MCF 10A (cell line): ENCODE measurements at regions of chr1 and their contacts with region 1.

Region 1: DNA sequence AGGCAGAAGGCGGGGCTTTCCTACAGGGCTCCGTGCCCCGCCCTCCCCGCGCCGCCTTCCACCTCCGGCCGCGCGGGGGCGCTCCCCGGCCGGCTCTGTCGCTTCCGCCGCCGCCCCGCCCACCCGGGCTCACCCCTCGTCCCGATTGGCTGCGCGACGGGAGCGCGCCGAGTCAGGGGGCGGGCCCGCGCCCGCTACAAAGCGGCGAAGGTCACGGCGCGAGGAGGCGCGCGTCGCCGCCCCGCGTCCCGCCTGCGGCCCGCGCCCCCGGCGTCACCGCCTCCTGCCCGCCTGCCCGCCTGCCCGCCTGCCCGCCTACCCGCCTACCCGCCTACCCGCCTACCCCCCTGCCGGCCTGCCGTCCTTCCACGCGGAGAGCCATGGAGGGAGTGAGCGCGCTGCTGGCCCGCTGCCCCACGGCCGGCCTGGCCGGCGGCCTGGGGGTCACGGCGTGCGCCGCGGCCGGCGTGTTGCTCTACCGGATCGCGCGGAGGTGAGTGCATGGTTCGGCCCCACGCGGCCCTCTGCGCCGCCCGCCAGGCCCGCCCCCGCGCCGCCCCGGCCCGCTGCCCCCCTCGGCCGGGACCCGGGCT is at the start of gene TMEM201:
- DNase-seq: peak; percentile 91
- H3K4me3 Mint-ChIP-seq: peak within 1 kb of the TSS; percentile 75
- H3K27ac Mint-ChIP-seq: peak within 1 kb of the TSS; percentile 32
- H3K4me1 Mint-ChIP-seq: peaks cover 16% of the 10 kb centered on the region
- H3K27me3 Mint-ChIP-seq: no peaks in the 10 kb centered on the region
- CTCF ChIP-seq: peak; percentile 62
- total RNA-seq, gene TMEM201: 9.2 and 11.1 TPM in 2 replicates

Region 2: GRCh38 chr1:9143250-9143649 is 445.4 kb before region 1 on chr1:
- CTCF ChIA-PET with region 1: no interaction called
- POLR2A ChIA-PET with region 1: no interaction called
- intact Hi-C with region 1: no loop called
- DNase-seq: peak; percentile 76
- H3K4me3 Mint-ChIP-seq: no peak overlapping the region
- H3K27ac Mint-ChIP-seq: no peak overlapping the region
- H3K4me1 Mint-ChIP-seq: peaks cover 10% of the 10 kb centered on the region
- H3K27me3 Mint-ChIP-seq: no peaks in the 10 kb centered on the region
- CTCF ChIP-seq: no peak

Region 3: GRCh38 chr1:9529190-9529589 is 59.5 kb before region 1 on chr1:
- CTCF ChIA-PET with region 1: no interaction called
- POLR2A ChIA-PET with region 1: no interaction called
- intact Hi-C with region 1: no loop called
- DNase-seq: no peak
- H3K4me3 Mint-ChIP-seq: no peak overlapping the region
- H3K27ac Mint-ChIP-seq: no peak overlapping the region
- H3K4me1 Mint-ChIP-seq: no peaks in the 10 kb centered on the region
- H3K27me3 Mint-ChIP-seq: no peaks in the 10 kb centered on the region
- CTCF ChIP-seq: no peak

Region 4: GRCh38 chr1:9573723-9574122 is 14.9 kb before region 1 on chr1:
- CTCF ChIA-PET with region 1: interaction called, 11 read pairs
- POLR2A ChIA-PET with region 1: interaction called, 3 read pairs
- intact Hi-C with region 1: no loop called
- DNase-seq: peak; percentile 27
- H3K4me3 Mint-ChIP-seq: no peak overlapping the region
- H3K27ac Mint-ChIP-seq: no peak overlapping the region
- H3K4me1 Mint-ChIP-seq: no peaks in the 10 kb centered on the region
- H3K27me3 Mint-ChIP-seq: no peaks in the 10 kb centered on the region
- CTCF ChIP-seq: no peak

Region 5: DNA sequence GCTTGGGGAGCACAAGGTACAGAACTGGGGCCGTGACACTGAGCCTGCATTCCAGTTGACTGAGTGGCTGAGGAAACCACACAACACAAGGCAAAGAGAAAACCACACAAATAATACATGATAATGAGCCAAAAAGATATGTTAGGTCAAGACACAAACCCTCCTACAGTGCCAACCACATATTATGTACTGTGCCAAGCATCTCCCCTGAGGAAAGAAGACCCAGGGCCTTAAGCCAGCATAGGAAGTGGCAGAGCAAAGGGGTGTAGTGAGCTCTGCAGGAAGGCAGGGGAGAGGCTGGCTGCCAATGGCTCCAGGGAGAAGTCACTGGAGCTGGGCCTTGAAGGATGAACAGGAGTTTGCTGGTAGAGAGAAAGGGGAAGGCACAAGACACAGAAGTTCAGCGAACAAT is 293.2 kb after region 1 on chr1:
- CTCF ChIA-PET with region 1: no interaction called
- POLR2A ChIA-PET with region 1: no interaction called
- intact Hi-C with region 1: no loop called
- DNase-seq: peak; percentile 91
- H3K4me3 Mint-ChIP-seq: no peak overlapping the region
- H3K27ac Mint-ChIP-seq: peak overlapping the region; percentile 14
- H3K4me1 Mint-ChIP-seq: peaks cover 29% of the 10 kb centered on the region
- H3K27me3 Mint-ChIP-seq: no peaks in the 10 kb centered on the region
- CTCF ChIP-seq: no peak